ENCODE measurements at regions of chrX and their contacts with region 1.

Region 1: GRCh38 chrX:49303346-49303745 is at the start of gene GAGE10:
- DNase-seq: no peak
- total RNA-seq, gene GAGE10: not detected

Region 2: DNA sequence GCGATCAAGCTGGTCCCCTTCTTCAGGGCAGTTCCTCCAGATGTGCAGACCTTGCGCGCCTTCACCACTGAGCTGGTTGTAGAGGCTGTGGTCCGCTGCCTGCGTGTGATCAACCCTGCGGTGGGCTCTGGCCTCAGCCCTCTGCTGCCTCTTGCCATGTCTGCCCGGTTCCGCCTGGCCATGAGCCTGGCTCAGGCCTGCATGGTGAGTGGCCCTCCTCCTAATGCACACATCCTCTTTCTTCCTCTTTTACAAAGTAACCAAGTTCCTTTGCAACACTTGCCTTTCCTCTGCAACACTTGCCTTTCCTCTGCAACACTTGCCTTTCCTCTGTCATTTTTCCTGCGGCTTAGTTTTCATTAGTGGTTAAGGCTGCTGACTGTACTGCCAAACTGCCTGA is 66.3 kb before region 1 on chrX:
- intact Hi-C with region 1: loop called in 1 of 2 experiments (anchors 2 kb)
- DNase-seq: no peak

Region 3: DNA sequence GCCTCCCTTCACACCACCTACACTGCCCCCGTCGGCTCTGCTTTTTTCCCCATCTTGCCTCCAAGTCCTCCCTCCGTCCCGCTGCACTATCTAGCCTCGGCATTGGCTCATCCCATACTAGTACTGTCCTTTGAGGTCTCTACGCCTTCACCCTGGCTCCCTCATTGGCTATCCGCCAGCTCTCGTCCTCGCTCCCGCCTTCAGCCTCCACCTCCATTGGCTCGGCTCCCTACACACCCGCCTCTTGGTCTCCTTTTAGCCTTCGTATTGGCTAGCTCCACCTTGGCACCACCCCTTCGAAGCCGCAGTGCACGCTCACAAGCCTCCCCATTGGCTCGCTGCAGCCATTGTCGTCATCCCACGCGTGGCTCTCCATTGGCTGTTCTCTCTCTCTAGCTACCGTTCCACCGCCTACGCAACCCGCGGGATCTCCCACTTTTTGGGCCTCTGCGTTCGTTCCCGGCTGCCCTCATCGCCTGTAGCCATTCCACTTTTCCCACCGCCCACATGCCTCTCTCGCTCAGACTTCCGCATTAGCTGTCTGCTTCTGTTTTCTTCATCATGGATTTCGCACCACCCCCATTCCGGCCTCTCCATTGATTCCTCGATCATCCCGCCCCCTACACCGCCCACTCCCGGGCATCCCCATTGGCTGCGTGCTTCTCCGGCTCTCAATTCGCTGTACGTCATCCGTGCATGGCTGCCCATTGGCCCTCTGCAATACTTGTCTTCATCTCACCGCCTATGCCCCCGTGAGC is 34.2 kb before region 1 on chrX:
- intact Hi-C with region 1: no loop called
- DNase-seq: peak; percentile 99

Region 4: DNA sequence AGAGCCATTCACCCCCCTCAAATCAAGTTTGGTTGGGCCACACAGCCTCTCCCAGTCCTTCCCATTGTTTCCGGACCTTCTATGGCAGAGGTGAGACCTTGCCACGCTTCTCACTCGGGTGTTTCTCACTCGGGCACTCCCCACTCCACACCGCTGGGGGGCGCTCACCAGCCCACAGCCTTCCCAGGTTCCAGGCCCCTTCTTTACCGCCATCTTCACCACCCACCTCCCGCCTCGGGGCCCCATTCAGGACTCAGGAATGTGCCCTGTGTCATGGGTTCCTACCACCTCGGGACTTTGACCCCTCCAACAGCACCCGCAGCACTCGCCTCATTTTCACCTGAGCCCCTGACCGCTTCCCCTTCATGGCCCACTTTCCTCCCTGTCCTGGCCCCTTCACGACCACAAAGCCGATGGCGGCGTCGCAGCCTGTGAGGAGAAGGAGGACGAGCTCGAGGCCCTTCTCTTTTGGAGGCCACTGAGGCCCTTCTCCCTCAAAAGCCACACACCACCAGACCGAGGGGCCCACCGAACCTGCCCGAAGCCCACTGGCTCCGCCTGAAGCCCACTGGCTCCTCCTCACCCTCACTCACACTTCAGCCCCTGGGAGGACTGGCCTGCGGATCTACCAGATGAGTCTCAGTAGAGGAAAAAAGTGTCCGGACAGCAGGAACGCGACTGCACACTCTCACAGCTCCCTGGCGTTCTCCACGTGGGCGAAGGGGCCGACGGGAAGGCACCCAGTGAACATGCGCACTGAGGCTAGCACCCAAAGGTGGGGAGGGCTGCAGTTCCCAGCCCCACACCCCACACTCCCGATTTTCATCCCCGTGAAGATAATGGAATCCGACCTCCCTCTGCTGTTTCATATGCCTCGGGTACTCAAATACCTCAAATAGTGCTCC is 392.2 kb after region 1 on chrX and contains the start of gene PAGE1:
- intact Hi-C with region 1: no loop called
- DNase-seq: no peak
- total RNA-seq, gene PAGE1: not detected